WTC11 (cell line): ENCODE measurements at regions of chr10 and their contacts with region 1.

Region 1: GRCh38 chr10:7687228-7687907 is 15.7 kb upstream of the ITIH2 start:
- DNase-seq: peak; percentile 86
- ATAC-seq: peak; percentile 98
- H3K4me3 Mint-ChIP-seq: no peak overlapping the region
- H3K27ac Mint-ChIP-seq: no peak overlapping the region
- H3K4me1 Mint-ChIP-seq: no peaks in the 10 kb centered on the region
- H3K27me3 Mint-ChIP-seq: peaks cover 7% of the 10 kb centered on the region; the same call in 1 of the 2 replicates
- CTCF ChIP-seq: peak; percentile 64; the same call in 1 of the 2 replicates

Region 2: DNA sequence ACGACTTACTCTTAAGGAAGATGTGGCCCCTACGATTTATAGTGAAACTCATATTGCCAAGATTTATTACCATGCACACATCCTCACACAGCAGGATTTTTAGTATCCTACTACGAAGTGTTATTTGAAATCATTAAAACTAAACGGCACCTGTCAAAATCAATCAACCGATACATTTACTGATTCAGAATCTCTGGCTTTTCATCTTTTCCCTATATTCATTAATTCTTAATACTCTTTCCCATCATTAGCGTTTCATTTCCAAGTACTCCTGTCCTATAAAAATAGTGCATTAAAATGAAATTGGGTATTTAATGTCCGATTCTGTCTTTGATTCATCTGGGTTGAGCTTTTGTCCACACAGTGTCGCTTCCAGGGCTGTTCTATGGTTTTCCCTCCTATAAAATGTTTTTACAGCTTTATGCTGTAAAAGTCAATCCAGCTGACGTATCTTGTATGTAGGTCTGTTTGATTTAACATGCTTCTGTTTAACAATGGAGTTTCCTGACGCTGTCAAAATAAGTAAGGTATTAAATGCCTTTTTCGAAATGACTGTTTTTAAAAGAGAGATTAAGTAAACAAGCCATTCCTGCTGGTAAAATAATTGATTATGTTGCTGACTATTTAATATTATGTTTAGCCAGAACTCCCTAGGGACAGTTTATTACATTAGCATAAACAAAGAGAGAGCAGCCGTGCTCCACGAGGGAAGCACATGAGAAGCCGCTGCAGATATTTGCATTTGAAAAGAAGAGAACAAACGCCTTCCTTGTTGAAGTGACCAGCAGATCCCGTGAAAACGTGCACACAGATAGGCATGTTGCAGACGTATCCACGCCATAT is 254.3 kb before region 1 on chr10:
- CTCF ChIA-PET with region 1: no interaction called
- POLR2A ChIA-PET with region 1: no interaction called
- DNase-seq: no peak
- ATAC-seq: peak; percentile 47; the same call in 1 of the 2 replicates
- H3K4me3 Mint-ChIP-seq: peak overlapping the region; percentile 36
- H3K27ac Mint-ChIP-seq: peak overlapping the region; percentile 21
- H3K4me1 Mint-ChIP-seq: peaks cover 49% of the 10 kb centered on the region
- H3K27me3 Mint-ChIP-seq: peaks cover 3% of the 10 kb centered on the region
- CTCF ChIP-seq: no peak

Region 3: DNA sequence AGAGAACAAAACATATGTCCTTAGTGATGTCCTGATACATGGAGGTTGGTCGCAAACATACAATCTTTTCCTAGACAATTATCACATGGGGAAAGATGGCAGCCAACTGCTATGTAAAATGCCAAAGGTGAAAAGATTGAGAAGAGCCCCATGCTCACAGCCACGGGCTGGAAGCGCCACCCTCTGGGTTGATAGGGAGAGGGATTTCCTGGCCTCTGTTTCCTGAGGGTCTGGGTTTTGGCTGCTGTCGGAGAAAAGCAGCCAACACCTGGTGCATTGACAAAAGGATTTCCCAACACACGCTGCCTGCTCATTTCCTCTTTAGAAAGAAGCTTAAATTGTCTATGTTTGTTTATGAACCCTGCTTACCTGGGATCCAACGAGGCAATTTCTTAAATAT is 64.4 kb before region 1 on chr10:
- CTCF ChIA-PET with region 1: interaction called, 10 read pairs
- POLR2A ChIA-PET with region 1: no interaction called
- DNase-seq: peak; percentile 59
- ATAC-seq: peak; percentile 98
- H3K4me3 Mint-ChIP-seq: no peak overlapping the region
- H3K27ac Mint-ChIP-seq: peak overlapping the region; percentile 94
- H3K4me1 Mint-ChIP-seq: peaks cover 6% of the 10 kb centered on the region
- H3K27me3 Mint-ChIP-seq: no peaks in the 10 kb centered on the region
- CTCF ChIP-seq: no peak

Region 4: DNA sequence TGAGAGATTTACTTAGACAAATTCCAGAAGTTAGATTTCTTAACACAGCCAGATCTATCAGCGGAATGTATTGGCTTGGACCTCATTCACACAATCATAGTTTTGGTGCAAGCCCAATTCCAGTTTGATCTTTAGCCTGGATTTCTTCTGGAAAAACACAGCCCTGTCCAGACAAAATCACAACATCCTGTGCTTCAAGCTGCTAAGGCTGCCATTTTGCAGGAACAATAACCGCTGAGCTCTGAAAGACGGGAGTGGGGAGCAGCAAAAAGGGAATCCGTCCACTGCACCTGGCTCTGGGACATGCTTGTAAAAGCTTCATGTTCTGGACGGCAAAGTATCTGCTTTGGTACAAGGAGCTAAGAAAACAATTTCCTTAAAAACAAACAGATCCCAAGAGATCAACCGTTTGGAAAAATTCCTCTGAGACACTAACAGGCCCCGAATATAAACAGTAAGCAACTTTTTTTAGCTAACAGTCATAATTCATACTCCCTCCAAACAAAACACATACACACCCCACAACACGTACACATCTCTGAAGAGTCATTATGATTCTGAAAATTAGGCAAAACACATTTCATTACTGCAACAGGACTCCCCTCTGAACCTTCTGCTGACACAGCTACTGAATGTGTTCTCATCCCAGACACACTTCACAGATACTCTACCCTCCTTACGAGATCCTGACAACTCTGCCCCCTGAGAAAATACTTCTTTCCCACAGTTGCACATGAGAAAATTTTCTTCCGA is 53.0 kb before region 1 on chr10:
- CTCF ChIA-PET with region 1: interaction called, 32 read pairs
- POLR2A ChIA-PET with region 1: no interaction called
- DNase-seq: no peak
- ATAC-seq: no peak
- H3K4me3 Mint-ChIP-seq: no peak overlapping the region
- H3K27ac Mint-ChIP-seq: peak overlapping the region; percentile 76
- H3K4me1 Mint-ChIP-seq: peaks cover 27% of the 10 kb centered on the region
- H3K27me3 Mint-ChIP-seq: peaks cover 11% of the 10 kb centered on the region
- CTCF ChIP-seq: no peak

Region 5: DNA sequence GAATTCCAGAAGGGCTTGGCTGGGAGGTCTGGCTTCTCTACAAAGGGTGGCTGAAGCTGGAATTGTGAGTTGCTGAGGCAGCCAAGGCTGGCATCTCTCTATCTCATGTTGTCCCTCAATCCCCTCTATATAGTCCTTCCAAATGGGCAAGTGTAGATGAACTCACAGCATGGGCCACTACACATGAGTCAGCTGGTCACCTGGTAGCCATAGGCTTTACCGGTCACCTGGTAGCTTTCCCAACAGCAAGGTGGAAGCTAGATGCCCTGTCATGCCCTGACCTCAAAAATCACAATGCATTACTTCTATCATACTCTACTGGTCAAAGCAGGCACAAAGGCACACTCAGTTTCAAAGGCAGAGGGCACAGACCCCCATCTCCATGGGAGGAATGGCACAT is 40.8 kb before region 1 on chr10:
- CTCF ChIA-PET with region 1: interaction called, 13 read pairs
- POLR2A ChIA-PET with region 1: no interaction called
- DNase-seq: no peak
- ATAC-seq: no peak
- H3K4me3 Mint-ChIP-seq: no peak overlapping the region
- H3K27ac Mint-ChIP-seq: peak overlapping the region; percentile 73; the same call in 1 of the 2 replicates
- H3K4me1 Mint-ChIP-seq: peaks cover 22% of the 10 kb centered on the region
- H3K27me3 Mint-ChIP-seq: no peaks in the 10 kb centered on the region
- CTCF ChIP-seq: no peak

Region 6: DNA sequence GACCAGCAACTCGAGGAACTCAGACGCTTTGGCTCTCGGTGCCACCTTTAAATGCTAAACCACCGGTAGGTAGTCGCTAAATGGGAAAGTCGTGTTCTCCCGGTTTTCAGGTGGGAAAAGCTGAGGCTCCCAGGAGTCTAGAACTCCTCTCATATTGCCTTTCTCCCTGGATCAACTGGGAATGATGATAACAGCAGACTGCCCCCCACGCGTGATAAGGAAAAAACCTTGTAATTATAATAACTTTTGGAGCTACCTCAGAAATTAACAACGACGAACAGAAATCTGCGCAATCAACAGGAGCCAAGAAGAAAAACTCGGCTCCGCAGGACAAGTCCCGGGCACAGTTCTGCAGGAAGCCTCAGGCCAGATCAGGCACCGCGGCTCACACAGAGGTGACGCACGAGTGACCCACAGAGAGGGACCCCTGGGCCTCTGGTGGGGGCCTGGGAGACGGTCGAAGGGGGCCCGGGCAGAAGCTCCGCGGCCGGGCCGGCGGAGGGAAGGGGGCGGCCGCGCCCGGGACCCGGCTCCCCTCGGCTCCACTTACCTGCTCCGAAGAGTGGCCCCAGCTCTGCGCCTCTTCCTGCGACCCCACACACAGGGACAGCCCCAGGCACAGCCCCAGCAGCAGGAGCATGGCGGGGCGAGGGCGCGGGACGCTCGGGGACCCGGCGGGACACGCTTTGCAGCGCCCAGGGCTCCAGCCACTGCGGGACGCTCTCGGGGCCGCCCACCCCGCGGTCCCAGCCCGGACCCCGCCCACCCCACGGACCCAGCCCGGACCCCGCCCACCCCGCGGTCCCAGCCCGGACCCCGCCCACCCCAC is 20.9 kb before region 1 on chr10 and contains the start of gene ITIH5:
- CTCF ChIA-PET with region 1: interaction called, 21 read pairs
- POLR2A ChIA-PET with region 1: no interaction called
- DNase-seq: peak; percentile 50
- ATAC-seq: peak; percentile 56
- H3K4me3 Mint-ChIP-seq: peak within 1 kb of the TSS; percentile 83
- H3K27ac Mint-ChIP-seq: no peak within 1 kb of the TSS
- H3K4me1 Mint-ChIP-seq: peaks cover 16% of the 10 kb centered on the region
- H3K27me3 Mint-ChIP-seq: peaks cover 44% of the 10 kb centered on the region
- CTCF ChIP-seq: no peak
- total RNA-seq, gene ITIH5: 3.1 to 3.8 TPM (median 3.6 TPM) in 3 replicates

Region 7: GRCh38 chr10:7756360-7756992 is 69.1 kb after region 1 on chr10:
- CTCF ChIA-PET with region 1: interaction called, 12 read pairs
- POLR2A ChIA-PET with region 1: no interaction called
- DNase-seq: peak; percentile 33
- ATAC-seq: peak; percentile 55; the same call in 1 of the 2 replicates
- H3K4me3 Mint-ChIP-seq: no peak overlapping the region
- H3K27ac Mint-ChIP-seq: no peak overlapping the region
- H3K4me1 Mint-ChIP-seq: no peaks in the 10 kb centered on the region
- H3K27me3 Mint-ChIP-seq: no peaks in the 10 kb centered on the region
- CTCF ChIP-seq: no peak

Region 8: GRCh38 chr10:7826971-7827370 is 139.6 kb after region 1 on chr10:
- CTCF ChIA-PET with region 1: no interaction called
- POLR2A ChIA-PET with region 1: no interaction called
- DNase-seq: no peak
- ATAC-seq: peak; percentile 53; the same call in 1 of the 2 replicates
- H3K4me3 Mint-ChIP-seq: no peak overlapping the region
- H3K27ac Mint-ChIP-seq: no peak overlapping the region; the same call in 1 of the 2 replicates
- H3K4me1 Mint-ChIP-seq: peaks cover 8% of the 10 kb centered on the region
- H3K27me3 Mint-ChIP-seq: no peaks in the 10 kb centered on the region
- CTCF ChIP-seq: no peak

Region 9: DNA sequence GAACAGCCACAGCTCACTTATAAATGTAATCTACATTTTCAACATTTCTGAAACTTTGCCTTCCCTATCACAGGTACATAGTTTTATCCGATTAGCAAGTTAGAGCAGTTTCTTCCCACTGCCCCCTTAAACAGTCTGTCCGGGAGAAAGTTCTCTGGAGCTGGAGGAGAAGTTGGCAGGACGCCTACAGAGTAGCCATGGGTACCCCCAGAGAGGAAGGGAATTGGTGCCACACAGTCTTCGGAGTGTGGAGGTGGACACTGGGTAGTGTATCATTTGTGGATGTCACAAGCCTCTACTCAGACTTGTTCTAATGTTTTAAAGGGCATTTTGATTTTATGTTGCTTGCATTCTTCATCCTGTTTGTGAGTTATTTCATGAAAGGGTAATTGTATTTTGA is 169.9 kb after region 1 on chr10:
- CTCF ChIA-PET with region 1: no interaction called
- POLR2A ChIA-PET with region 1: no interaction called
- DNase-seq: no peak
- ATAC-seq: no peak
- H3K4me3 Mint-ChIP-seq: no peak overlapping the region
- H3K27ac Mint-ChIP-seq: no peak overlapping the region; the same call in 1 of the 2 replicates
- H3K4me1 Mint-ChIP-seq: peaks cover 24% of the 10 kb centered on the region
- H3K27me3 Mint-ChIP-seq: peaks cover 4% of the 10 kb centered on the region; the same call in 1 of the 2 replicates
- CTCF ChIP-seq: no peak